Cardiac septum (tissue), 1 donor: ENCODE measurements at regions of chr12 and their contacts with region 1.

Region 1: DNA sequence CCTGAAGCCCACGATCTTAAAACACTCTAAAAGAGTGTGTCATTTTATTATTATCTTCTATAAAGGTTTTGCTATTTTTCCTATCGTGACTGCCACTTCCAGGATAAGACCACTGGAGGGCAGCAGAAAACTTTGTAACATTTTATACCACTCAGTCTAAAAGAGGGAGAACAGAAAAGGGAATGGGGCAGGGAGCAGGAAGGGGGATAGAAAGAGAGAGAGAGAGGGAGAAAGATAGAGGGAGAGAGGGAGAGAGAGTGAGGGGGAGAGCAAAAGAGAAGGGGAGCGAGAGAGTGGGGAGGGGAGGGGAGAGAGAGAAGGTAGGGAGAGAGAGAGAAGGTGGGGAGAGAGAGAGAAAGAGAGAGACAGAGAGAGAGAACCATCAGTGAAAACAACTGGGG is 2.0 kb upstream of the ART4 start:
- DNase-seq: no peak

Region 2: GRCh38 chr12:14723763-14724162 is 121.6 kb before region 1 on chr12:
- intact Hi-C with region 1: loop called (anchors 10 kb)
- DNase-seq: no peak

Region 3: GRCh38 chr12:14803011-14803829 is 42.1 kb before region 1 on chr12 and contains the starts of genes C12orf60 and WBP11:
- intact Hi-C with region 1: loop called (anchors 5 kb)
- DNase-seq: peak; percentile 95
- total RNA-seq, gene C12orf60: 2.5 TPM
- total RNA-seq, gene WBP11: 51.7 TPM

Region 4: DNA sequence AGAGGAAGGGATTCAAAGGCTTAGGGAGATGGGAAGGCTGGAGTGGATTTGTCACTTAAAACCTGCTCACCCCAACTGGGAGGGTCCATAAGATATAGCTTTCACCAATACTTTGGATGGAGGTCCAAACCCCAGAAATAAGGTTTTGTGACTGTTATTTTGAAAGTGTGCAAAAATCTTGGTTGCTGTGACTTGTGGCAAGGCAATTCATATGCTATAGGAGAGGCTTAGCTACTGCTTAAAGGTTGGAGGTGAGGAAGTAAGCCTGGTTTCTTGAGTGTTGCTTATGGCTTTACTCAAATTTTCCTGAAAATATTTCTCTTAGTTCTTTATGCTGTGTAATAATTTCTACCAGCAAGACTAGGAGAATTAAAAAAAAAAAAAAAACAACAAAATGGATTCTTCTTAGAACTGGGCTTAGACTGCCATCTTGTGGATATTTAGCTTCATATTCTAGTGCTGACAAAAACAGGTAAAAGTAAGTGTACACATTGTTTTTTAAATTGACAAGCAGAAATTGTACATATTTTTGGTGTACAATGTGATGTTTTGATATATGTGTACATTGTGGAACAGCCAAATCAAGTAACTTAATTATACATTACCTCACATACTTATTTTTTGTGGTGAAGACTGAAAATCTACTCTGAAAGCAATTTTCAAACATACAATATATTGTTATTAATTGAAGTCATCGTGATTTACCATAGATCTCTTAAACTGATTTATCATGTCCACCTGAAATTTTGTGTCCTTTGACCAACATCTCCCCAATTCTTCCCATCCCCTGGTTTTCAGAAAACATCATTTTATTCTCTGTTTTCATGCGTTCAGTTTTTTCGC is 150.5 kb after region 1 on chr12:
- intact Hi-C with region 1: loop called (anchors 1 kb)
- DNase-seq: no peak

Region 5: GRCh38 chr12:15193946-15194345 is 348.6 kb after region 1 on chr12:
- intact Hi-C with region 1: no loop called
- DNase-seq: no peak

Region 6: GRCh38 chr12:15276088-15276698 is 430.8 kb after region 1 on chr12:
- intact Hi-C with region 1: loop called (anchors 10 kb)
- DNase-seq: no peak